Breast epithelium (tissue), 4 donors: ENCODE measurements at regions of chr17 and their contacts with region 1.

Region 1: DNA sequence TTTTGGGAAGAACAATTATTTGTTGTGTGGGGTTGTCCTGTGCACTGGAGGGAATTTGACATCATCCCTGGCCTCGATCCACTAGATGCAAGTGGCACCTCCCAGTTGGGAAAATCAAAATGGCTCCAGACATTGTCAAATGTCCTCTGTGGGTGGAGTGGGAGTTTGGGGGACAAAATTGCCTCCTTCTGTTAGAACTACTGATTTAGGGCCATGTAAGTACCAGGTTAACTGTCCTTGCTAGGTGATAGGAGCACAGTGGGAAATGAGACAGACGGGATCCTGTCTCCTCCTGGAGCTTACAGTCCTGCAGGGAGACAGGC is 56.8 kb downstream of the ARHGAP23 start:
- DNase-seq: no peak
- H3K4me3 ChIP-seq: no peak overlapping the region
- H3K27ac ChIP-seq: peak overlapping the region in 1 of 2 donors; percentile 32
- H3K4me1 ChIP-seq: no peaks in the 10 kb centered on the region
- H3K27me3 ChIP-seq: no peaks in the 10 kb centered on the region
- CTCF ChIP-seq: no peak
- POLR2A ChIP-seq: no peak

Region 2: GRCh38 chr17:38428112-38428642 is 56.9 kb before region 1 on chr17 and contains the start of gene ARHGAP23:
- intact Hi-C with region 1: loop called (anchors 10 kb)
- DNase-seq: no peak
- H3K4me3 ChIP-seq: peak within 1 kb of the TSS; percentile 79 to 93 (median 88)
- H3K27ac ChIP-seq: peak within 1 kb of the TSS; percentile 83 to 88
- H3K4me1 ChIP-seq: peaks cover 10 to 14% of the 10 kb centered on the region in 2 donors
- H3K27me3 ChIP-seq: no peaks in the 10 kb centered on the region
- CTCF ChIP-seq: no peak
- POLR2A ChIP-seq: no peak
- total RNA-seq, gene ARHGAP23: 13.8 to 25.2 (median 21.1) TPM

Region 3: GRCh38 chr17:38465391-38466345 is 19.4 kb before region 1 on chr17:
- intact Hi-C with region 1: loop called (anchors 1 kb)
- DNase-seq: peak in 1 of 2 donors; percentile 84
- H3K4me3 ChIP-seq: peak overlapping the region; percentile 44 to 70 (median 55)
- H3K27ac ChIP-seq: peak overlapping the region; percentile 93 to 97
- H3K4me1 ChIP-seq: peaks cover 0 to 9% of the 10 kb centered on the region in 2 donors
- H3K27me3 ChIP-seq: no peaks in the 10 kb centered on the region
- CTCF ChIP-seq: no peak
- POLR2A ChIP-seq: no peak

Region 4: GRCh38 chr17:38510424-38511080 is 25.4 kb after region 1 on chr17:
- intact Hi-C with region 1: no loop called
- DNase-seq: no peak
- H3K4me3 ChIP-seq: peak overlapping the region in 2 of 3 donors; percentile 31 to 47
- H3K27ac ChIP-seq: no peak overlapping the region
- H3K4me1 ChIP-seq: peaks cover 0 to 3% of the 10 kb centered on the region in 2 donors
- H3K27me3 ChIP-seq: peaks cover 0 to 9% of the 10 kb centered on the region in 2 donors
- CTCF ChIP-seq: peak in 1 of 3 donors; percentile 15
- POLR2A ChIP-seq: no peak

Region 5: DNA sequence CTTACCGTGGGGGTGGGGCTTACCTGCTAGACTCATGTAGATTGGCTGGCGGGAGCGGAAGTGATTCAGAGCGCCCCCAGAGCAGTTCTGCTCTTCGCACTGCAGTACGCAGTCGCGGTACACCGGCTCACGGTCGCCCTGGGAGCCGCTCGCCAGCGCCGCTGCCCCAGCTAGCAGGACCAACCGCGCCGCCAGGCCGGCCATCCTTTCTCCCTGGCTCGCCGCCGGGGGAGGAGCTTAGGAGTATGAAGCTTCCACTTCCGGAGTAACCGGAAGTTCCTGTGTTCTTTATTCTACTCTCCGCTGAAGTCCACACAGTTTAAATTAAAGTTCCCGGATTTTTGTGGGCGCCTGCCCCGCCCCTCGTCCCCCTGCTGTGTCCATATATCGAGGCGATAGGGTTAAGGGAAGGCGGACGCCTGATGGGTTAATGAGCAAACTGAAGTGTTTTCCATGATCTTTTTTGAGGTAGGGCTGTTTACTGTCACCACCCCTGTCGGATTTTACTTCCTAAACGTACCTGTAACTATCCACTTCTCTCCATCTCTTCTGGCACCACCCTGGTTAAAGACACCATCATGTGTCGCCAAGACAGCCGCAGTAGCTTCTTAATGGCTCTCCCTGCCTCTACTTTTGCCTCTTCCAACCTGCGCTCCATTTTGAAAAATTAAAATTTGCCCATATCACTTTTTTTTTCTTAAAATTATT is 1202.9 kb after region 1 on chr17 and contains the start of gene PGAP3:
- intact Hi-C with region 1: no loop called
- DNase-seq: peak; percentile 78 to 81
- H3K4me3 ChIP-seq: peak within 1 kb of the TSS; percentile 60 to 76 (median 60)
- H3K27ac ChIP-seq: peak within 1 kb of the TSS; percentile 90 to 93
- H3K4me1 ChIP-seq: peaks cover 6 to 10% of the 10 kb centered on the region in 2 donors
- H3K27me3 ChIP-seq: no peaks in the 10 kb centered on the region
- CTCF ChIP-seq: no peak
- POLR2A ChIP-seq: peak; percentile 40
- total RNA-seq, gene PGAP3: 11.7 to 23.7 (median 21.6) TPM